Dendritic cell treated with granulocyte-macrophage colony-stimulating factor and Interleukin-4, amounts not matched to agents 40 ng/mL and 50 ng/mL, for 4 days (primary cell): ENCODE measurements at regions of chr2 and their contacts with region 1.

Region 1: DNA sequence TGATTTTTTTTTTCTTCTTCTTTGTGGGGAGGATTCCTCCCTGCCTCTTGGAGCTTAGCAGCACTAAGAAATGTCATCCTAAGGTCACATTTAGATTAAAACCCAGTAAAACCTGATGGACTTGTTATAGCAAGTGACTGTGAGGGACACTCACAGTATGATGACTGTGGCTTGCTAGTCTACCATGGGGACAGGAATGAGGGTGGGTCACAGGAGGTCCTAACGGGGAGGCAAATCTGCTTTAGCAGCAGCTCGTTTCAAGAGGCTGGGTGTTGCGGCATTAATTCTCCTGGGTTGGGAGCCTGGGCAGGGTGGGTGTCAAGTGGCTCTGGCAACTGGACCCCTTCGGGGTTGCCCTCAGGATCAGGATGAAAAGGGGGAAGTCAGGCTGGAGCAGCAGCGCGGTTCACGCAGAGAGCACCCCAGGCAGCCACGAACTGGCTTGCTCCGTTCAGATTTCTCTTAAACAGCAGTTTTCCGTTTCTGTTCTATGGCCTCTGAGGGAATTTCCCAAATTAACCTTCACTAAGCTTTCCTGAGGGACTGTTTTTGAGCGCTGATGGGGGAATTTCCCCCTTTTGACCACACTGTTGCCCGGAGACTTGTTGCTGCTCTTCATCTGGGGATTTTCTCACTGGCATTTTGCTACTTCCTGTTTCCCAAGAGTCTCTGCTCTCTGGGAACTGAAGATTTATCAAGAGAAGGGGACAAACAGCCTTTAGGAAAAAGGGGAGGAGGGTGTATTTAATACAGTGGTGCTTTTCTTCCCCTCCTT is 59.8 kb upstream of the PELI1 start:
- H3K4me3 Mint-ChIP-seq: peak overlapping the region; percentile 62
- H3K27ac Mint-ChIP-seq: peak overlapping the region; percentile 90
- H3K4me1 Mint-ChIP-seq: peaks cover 21% of the 10 kb centered on the region
- H3K27me3 Mint-ChIP-seq: no peaks in the 10 kb centered on the region

Region 2: DNA sequence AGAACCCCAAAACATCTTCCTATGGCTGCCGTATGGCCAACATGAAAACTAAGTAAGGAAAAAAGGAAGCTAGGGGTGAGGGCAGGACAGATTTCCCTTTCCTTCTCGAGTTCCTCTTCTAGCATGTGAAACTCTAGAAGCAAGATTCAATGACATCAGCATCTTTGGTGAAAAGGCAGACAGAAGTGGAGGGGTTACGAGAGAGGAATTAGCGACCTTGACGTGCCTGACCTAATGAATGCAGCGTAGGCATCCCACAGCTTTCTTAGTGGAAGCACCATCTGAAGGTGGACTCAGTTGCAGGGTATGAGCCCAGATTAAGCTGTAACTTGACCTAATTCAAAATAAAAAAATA is 11.9 kb before region 1 on chr2:
- intact Hi-C with region 1: loop called (anchors 1 kb)
- H3K4me3 Mint-ChIP-seq: peak overlapping the region; percentile 17
- H3K27ac Mint-ChIP-seq: peak overlapping the region; percentile 88
- H3K4me1 Mint-ChIP-seq: peaks cover 54% of the 10 kb centered on the region
- H3K27me3 Mint-ChIP-seq: no peaks in the 10 kb centered on the region

Region 3: GRCh38 chr2:64228126-64228678 is 24.2 kb after region 1 on chr2:
- intact Hi-C with region 1: loop called (anchors 2 kb)
- H3K4me3 Mint-ChIP-seq: peak overlapping the region; percentile 89
- H3K27ac Mint-ChIP-seq: peak overlapping the region; percentile 88
- H3K4me1 Mint-ChIP-seq: peaks cover 38% of the 10 kb centered on the region
- H3K27me3 Mint-ChIP-seq: peaks cover 1% of the 10 kb centered on the region